ENCODE measurements at regions of chr12 and their contacts with region 1.

Region 1: DNA sequence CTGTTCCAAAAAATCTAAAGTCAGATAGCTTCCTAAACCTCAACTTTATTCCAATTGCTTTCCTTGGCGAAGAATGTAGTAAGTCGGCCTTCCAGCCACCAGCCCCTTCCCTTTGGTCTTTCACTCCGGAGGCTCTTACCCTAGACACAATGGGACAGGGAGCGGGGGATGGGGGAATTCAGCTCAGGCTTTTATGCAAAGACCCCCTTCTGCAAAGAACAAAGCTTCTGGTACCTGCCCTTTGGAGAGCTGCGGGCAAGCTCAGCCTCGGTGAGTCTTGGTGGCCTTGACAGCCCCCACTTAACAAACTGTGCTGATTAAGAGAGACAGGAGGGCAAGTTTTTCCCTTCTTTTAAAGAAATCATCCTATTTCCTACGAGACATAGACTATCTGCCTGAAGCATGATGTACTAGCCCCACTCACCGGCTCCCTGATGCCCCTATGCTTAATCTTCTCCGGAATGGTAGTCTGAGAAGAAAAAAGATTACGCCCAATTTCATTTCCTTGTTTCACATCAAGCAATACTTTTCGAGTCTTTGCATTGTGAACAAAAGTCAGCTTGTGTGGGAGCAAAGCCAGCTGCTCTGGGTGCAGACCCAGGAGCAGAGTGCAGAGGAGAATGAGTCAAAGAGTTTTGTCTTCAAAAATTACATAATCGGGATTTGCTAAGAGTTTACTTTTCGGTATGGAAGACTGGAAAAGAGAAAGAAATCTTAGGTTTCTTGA is 1.5 kb upstream of the NANOG start:
- DNase-seq: peak; percentile 61 to 68
- H3K4me3 ChIP-seq: peak overlapping the region; percentile 13 to 72 (median 22); a peak in 5 of 8 replicates
- H3K27ac ChIP-seq: peak overlapping the region; percentile 43
- H3K4me1 ChIP-seq: peaks cover 8 to 21% (median 14%) of the 10 kb centered on the region in 4 experiments
- H3K27me3 ChIP-seq: no peaks in the 10 kb centered on the region
- CTCF ChIP-seq: no peak
- EP300 ChIP-seq: no peak
- POLR2A ChIP-seq: no peak
- RAD21 ChIP-seq: peak in 1 of 2 experiments; percentile 16; a peak in 2 of 4 replicates

Region 2: GRCh38 chr12:7797698-7798398 is 10.1 kb after region 1 on chr12:
- CTCF ChIA-PET with region 1: interaction called, 8 read pairs
- POLR2A ChIA-PET with region 1: interaction called, 25 read pairs
- DNase-seq: no peak
- H3K4me3 ChIP-seq: peak overlapping the region in 1 of 4 experiments; percentile 44; a peak in 1 of 8 replicates
- H3K27ac ChIP-seq: peak overlapping the region; percentile 69; the same call in 1 of the 2 replicates
- H3K4me1 ChIP-seq: peaks cover 6 to 18% (median 13%) of the 10 kb centered on the region in 4 experiments
- H3K27me3 ChIP-seq: no peaks in the 10 kb centered on the region
- CTCF ChIP-seq: no peak
- EP300 ChIP-seq: no peak
- POLR2A ChIP-seq: no peak
- RAD21 ChIP-seq: no peak

Measured in H1 (cell line).